ENCODE measurements at regions of chr13 and their contacts with region 1.

Region 1: DNA sequence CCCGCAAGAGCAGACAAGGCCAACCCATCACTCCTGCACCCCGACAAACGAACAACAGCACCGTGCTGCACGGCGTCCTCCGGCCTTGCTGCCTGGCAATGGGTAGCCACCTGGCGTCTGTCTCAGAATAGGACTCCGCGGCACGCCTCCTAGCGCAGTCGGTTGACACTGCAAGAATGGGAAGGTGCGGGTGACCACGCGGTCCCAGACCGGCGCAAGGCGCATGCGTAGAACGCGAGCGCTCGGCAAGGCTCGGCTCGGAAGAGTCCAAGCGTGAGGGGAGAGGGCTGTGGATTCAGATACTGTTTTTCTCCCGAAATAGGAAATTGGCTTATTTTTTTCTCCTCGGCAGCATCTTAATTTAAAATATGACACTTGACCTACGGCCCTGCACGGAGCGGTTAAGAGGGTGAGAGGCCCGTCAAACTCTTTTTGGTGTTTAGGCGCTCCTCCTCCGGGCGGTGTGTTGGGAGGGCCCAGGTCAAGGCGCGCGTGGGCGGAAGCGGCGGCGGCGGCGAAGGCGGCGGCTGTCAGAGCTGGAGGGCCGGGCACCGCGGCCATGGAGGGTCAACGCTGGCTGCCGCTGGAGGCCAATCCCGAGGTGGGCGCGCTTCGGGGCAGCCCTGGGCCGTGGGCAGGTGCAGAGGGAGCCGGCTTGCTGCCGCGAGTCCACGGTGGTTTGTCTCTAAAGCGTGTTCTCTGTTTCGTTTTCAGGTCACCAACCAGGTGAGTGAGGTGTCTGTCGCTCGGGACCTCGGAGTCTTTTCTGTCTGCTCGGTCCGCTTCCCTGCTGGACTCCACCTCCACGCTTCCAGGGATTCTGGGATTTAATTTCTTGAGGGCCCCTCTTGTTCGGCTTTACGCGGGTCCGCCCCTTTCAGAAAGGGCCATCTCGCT is at the start of gene UCHL3:
- DNase-seq: peak; percentile 97
- H3K4me3 ChIP-seq: peak within 1 kb of the TSS; percentile 76
- H3K27ac ChIP-seq: peak within 1 kb of the TSS; percentile 97
- H3K4me1 ChIP-seq: peaks cover 12% of the 10 kb centered on the region
- H3K27me3 ChIP-seq: no peaks in the 10 kb centered on the region
- CTCF ChIP-seq: peak; percentile 91
- total RNA-seq, gene UCHL3: 41.3 and 54.7 TPM in 2 replicates

Region 2: GRCh38 chr13:75372517-75372916 is 177.0 kb before region 1 on chr13:
- CTCF ChIA-PET with region 1: no interaction called
- POLR2A ChIA-PET with region 1: no interaction called
- intact Hi-C with region 1: loop called (anchors 2 kb)
- DNase-seq: peak; percentile 60
- H3K4me3 ChIP-seq: no peak overlapping the region
- H3K27ac ChIP-seq: no peak overlapping the region
- H3K4me1 ChIP-seq: no peaks in the 10 kb centered on the region
- H3K27me3 ChIP-seq: no peaks in the 10 kb centered on the region
- CTCF ChIP-seq: peak; percentile 68

Region 3: GRCh38 chr13:75482070-75482819 is 67.3 kb before region 1 on chr13 and contains the start of gene TBC1D4:
- CTCF ChIA-PET with region 1: no interaction called
- POLR2A ChIA-PET with region 1: no interaction called
- intact Hi-C with region 1: loop called (anchors 1 kb)
- DNase-seq: peak; percentile 91
- H3K4me3 ChIP-seq: peak within 1 kb of the TSS; percentile 83
- H3K27ac ChIP-seq: peak within 1 kb of the TSS; percentile 35
- H3K4me1 ChIP-seq: no peaks in the 10 kb centered on the region
- H3K27me3 ChIP-seq: peaks cover 32% of the 10 kb centered on the region
- CTCF ChIP-seq: peak; percentile 90
- total RNA-seq, gene TBC1D4: 9.8 and 10.6 TPM in 2 replicates

Measured in A673 (cell line).